ENCODE measurements at regions of chr11 and their contacts with region 1.

Region 1: GRCh38 chr11:20647976-20648565 is 21.3 kb upstream of the NELL1 start:
- DNase-seq: peak in 1 of 3 donors; percentile 76
- ATAC-seq: peak; percentile 56
- H3K4me3 ChIP-seq: no peak overlapping the region
- H3K4me1 ChIP-seq: no peaks in the 10 kb centered on the region
- CTCF ChIP-seq: peak; percentile 63

Region 2: GRCh38 chr11:20596205-20597153 is 51.6 kb before region 1 on chr11:
- intact Hi-C with region 1: no loop called
- DNase-seq: no peak
- ATAC-seq: no peak
- H3K4me3 ChIP-seq: no peak overlapping the region
- H3K4me1 ChIP-seq: no peaks in the 10 kb centered on the region
- CTCF ChIP-seq: no peak

Region 3: DNA sequence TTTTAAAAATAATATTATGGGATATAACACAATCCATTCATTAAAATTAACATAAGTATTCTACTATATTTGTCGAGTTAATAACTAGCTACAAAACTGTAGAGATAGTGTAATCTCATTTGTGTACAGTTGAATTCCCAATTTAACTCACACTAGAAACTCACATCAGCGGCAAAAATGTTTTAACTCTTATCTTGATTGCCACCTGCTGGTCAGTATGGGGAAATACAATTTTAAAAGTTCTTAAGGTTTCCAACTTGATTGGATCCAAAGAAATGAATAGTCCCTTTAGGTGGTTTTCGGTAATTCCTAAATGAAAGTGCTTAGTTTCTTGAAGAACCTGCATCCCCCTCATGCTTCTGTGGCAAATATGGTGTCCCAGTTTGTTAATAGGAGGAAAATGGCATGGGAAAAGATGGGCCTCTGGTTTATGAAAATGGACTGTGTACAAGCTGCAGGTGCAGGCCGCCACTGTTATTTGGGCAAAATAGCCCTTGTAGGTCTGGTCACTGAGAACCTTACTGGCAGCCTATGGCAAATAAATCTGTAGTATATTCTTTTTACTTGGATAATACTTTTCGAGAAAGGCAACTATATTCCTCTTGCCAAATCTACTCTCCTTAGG is 1656.4 kb after region 1 on chr11:
- intact Hi-C with region 1: loop called in 1 of 2 experiments (anchors 10 kb)
- DNase-seq: no peak
- ATAC-seq: peak; percentile 35
- H3K4me3 ChIP-seq: no peak overlapping the region
- H3K4me1 ChIP-seq: no peaks in the 10 kb centered on the region
- CTCF ChIP-seq: no peak